Heart right ventricle (tissue), 16 donors: ENCODE measurements at regions of chr10 and their contacts with region 1.

Region 1: DNA sequence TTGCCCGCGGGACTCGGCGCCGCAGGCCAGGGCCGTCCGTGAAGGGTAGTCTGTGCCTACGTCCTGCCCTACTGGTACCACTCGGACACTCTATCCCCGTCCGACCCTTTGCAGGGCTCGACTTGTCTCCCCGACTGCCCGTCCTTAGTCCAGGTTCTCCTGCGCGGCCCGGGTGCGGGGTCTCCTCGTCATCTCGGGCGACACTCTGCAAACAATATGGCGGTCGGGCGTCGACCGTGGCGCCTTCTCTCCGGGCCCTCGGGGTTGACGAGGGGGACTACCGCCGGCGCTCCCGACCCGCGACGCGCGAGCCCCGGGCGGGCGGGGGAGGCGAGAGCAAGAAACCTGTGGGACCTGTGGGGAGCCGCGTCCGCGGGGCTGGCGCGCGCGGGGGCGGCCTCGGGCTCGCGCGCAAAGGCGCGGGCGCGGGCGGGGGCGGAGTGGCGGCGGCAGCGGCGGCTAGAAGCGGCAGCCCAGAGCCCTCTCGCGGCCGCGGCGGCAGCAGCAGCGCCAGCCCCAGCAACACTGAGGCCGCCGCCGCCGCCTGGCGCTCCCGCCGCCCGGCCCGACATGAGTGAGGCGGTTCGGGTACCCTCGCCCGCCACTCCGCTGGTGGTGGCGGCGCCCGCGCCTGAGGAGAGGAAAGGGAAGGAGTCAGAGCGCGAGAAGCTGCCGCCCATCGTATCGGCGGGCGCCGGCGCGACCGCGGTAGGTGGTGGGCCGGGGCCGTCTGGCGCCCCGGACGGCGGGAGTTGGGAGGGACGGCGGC is at the start of gene HECTD2:
- DNase-seq: peak; percentile 81 to 85
- ATAC-seq: peak; percentile 67 to 91 (median 84)
- H3K4me3 ChIP-seq: peak within 1 kb of the TSS; percentile 66 to 92 (median 88)
- H3K27ac ChIP-seq: peak within 1 kb of the TSS; percentile 99 to 100 (median 100)
- H3K4me1 ChIP-seq: peaks cover 0 to 27% (median 13%) of the 10 kb centered on the region in 9 donors
- H3K27me3 ChIP-seq: no peaks in the 10 kb centered on the region
- CTCF ChIP-seq: peak; percentile 24 to 72 (median 48)
- total RNA-seq, gene HECTD2: 3.1 to 6.9 (median 5.4) TPM

Region 2: GRCh38 chr10:91551856-91552255 is 141.8 kb after region 1 on chr10:
- intact Hi-C with region 1: loop called in 1 of 10 experiments (anchors 10 kb)
- DNase-seq: peak; percentile 38 to 62
- ATAC-seq: peak; percentile 75 to 93 (median 86)
- H3K4me3 ChIP-seq: peak overlapping the region in 8 of 10 donors; percentile 3 to 44 (median 32)
- H3K27ac ChIP-seq: peak overlapping the region in 5 of 10 donors; percentile 23 to 55 (median 42)
- H3K4me1 ChIP-seq: peaks cover 0 to 24% (median 3%) of the 10 kb centered on the region in 9 donors
- H3K27me3 ChIP-seq: no peaks in the 10 kb centered on the region
- CTCF ChIP-seq: peak in 8 of 9 donors; percentile 36 to 84 (median 73)